Heart right ventricle (tissue), 16 donors: ENCODE measurements at regions of chr2 and their contacts with region 1.

Region 1: GRCh38 chr2:85538486-85539360 is at the start of gene MAT2A:
- DNase-seq: peak; percentile 95 to 96
- ATAC-seq: peak; percentile 88 to 94 (median 94)
- H3K4me3 ChIP-seq: peak within 1 kb of the TSS; percentile 59 to 97 (median 94)
- H3K27ac ChIP-seq: peak within 1 kb of the TSS; percentile 97 to 100 (median 100)
- H3K4me1 ChIP-seq: peaks cover 16 to 58% (median 50%) of the 10 kb centered on the region in 9 donors
- H3K27me3 ChIP-seq: no peaks in the 10 kb centered on the region
- CTCF ChIP-seq: peak; percentile 63 to 86 (median 80)
- total RNA-seq, gene MAT2A: 94.5 to 460 (median 129) TPM

Region 2: DNA sequence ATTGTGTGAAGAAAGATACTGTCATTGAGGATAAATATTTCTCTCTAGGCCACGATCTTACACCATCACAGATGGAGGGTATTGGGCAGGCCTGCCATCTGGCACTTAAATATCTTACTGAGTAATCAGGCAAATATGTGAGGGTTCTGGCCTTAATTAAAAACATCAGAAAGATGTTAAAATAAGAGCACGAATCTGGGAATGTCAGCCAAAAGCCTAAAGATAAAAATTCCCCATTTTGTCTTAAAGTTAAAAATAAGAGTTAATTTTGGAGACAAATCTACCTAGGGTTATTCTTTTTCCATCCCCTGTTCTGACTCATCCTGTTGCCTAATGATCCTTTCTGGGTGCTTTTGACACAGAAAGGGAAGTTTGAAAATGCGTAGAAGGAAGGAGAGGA is 1200.7 kb before region 1 on chr2:
- intact Hi-C with region 1: no loop called
- DNase-seq: no peak
- ATAC-seq: no peak
- H3K4me3 ChIP-seq: no peak overlapping the region
- H3K27ac ChIP-seq: no peak overlapping the region
- H3K4me1 ChIP-seq: no peaks in the 10 kb centered on the region
- H3K27me3 ChIP-seq: no peaks in the 10 kb centered on the region
- CTCF ChIP-seq: no peak

Region 3: GRCh38 chr2:85354286-85355072 is 184.2 kb before region 1 on chr2 and contains the starts of genes ELMOD3 and RETSAT:
- intact Hi-C with region 1: loop called in 1 of 10 experiments (anchors 5 kb)
- DNase-seq: peak; percentile 93 to 100
- ATAC-seq: peak; percentile 97 to 99 (median 98)
- H3K4me3 ChIP-seq: peak within 1 kb of the TSS; percentile 52 to 87 (median 68)
- H3K27ac ChIP-seq: peak within 1 kb of the TSS; percentile 38 to 92 (median 90)
- H3K4me1 ChIP-seq: peaks cover 0 to 46% (median 22%) of the 10 kb centered on the region in 9 donors
- H3K27me3 ChIP-seq: no peaks in the 10 kb centered on the region
- CTCF ChIP-seq: peak in 2 of 9 donors; percentile 8 to 13
- total RNA-seq, gene ELMOD3: 7.3 to 12.5 (median 8.8) TPM
- total RNA-seq, gene RETSAT: 27.9 to 87.4 (median 35.6) TPM

Region 4: DNA sequence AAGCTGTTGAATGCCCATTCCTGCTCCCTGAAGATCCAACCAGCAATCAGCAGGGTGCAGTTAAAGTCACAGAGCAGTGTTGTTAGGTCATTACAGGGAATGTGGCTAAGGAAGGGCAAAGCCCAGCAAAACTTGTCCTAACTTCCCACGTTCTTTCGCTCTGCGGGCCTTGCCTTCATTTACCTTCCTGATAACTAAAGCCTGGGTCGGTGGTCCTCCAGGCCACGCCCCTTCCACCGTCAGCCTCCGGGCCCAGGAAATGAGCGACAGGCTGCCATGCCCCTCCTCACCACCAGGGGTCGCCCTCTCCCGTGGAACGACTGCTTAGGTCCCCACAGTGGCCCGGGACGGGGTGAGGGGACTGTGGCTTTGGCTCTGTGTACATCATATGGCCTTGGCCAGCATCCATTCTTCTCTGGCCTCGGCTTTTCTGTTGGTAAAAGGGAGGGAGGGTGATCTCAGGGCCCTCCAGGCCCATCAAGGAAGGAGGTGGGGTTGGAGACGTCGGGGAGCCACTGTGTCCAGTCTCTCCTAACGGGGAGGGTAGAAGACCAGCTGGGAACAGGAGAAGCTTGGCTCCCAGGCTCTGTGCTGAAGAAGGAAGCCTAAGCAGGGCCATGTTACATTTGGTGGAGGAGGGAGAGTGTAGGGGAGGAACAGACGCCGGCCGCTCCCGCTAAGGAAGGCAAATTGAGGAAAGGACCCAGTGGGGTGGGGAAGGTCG is 118.0 kb before region 1 on chr2:
- intact Hi-C with region 1: loop called in 2 of 10 experiments (anchors 1 to 5 kb)
- DNase-seq: peak; percentile 88 to 92
- ATAC-seq: peak; percentile 74 to 86 (median 80)
- H3K4me3 ChIP-seq: peak overlapping the region in 6 of 10 donors; percentile 13 to 41 (median 28)
- H3K27ac ChIP-seq: peak overlapping the region; percentile 47 to 97 (median 83)
- H3K4me1 ChIP-seq: peaks cover 15 to 43% (median 34%) of the 10 kb centered on the region in 9 donors
- H3K27me3 ChIP-seq: no peaks in the 10 kb centered on the region
- CTCF ChIP-seq: peak; percentile 100

Region 5: GRCh38 chr2:85437488-85438284 is 101.0 kb before region 1 on chr2:
- intact Hi-C with region 1: loop called in 8 of 10 experiments (anchors 1 to 5 kb)
- DNase-seq: peak; percentile 87 to 92
- ATAC-seq: peak; percentile 79 to 89 (median 81)
- H3K4me3 ChIP-seq: peak overlapping the region in 9 of 10 donors; percentile 32 to 59 (median 55)
- H3K27ac ChIP-seq: peak overlapping the region; percentile 73 to 98 (median 94)
- H3K4me1 ChIP-seq: peaks cover 19 to 69% (median 46%) of the 10 kb centered on the region in 9 donors
- H3K27me3 ChIP-seq: no peaks in the 10 kb centered on the region
- CTCF ChIP-seq: no peak

Region 6: GRCh38 chr2:85485815-85486214 is 52.9 kb before region 1 on chr2:
- intact Hi-C with region 1: no loop called
- DNase-seq: no peak
- ATAC-seq: no peak
- H3K4me3 ChIP-seq: no peak overlapping the region
- H3K27ac ChIP-seq: no peak overlapping the region
- H3K4me1 ChIP-seq: peaks cover 0 to 5% (median 0%) of the 10 kb centered on the region in 9 donors
- H3K27me3 ChIP-seq: no peaks in the 10 kb centered on the region
- CTCF ChIP-seq: no peak

Region 7: GRCh38 chr2:85504778-85505323 is 33.9 kb before region 1 on chr2:
- intact Hi-C with region 1: loop called in 5 of 10 experiments (anchors 2 to 5 kb)
- DNase-seq: peak in 1 of 2 donors; percentile 40
- ATAC-seq: peak; percentile 35 to 89 (median 64)
- H3K4me3 ChIP-seq: no peak overlapping the region
- H3K27ac ChIP-seq: peak overlapping the region in 6 of 10 donors; percentile 36 to 74 (median 62)
- H3K4me1 ChIP-seq: peaks cover 0 to 71% (median 41%) of the 10 kb centered on the region in 9 donors
- H3K27me3 ChIP-seq: no peaks in the 10 kb centered on the region
- CTCF ChIP-seq: no peak

Region 8: GRCh38 chr2:85792783-85793441 is 254.2 kb after region 1 on chr2:
- intact Hi-C with region 1: no loop called
- DNase-seq: no peak
- ATAC-seq: no peak
- H3K4me3 ChIP-seq: no peak overlapping the region
- H3K27ac ChIP-seq: peak overlapping the region in 6 of 10 donors; percentile 19 to 59 (median 49)
- H3K4me1 ChIP-seq: peaks cover 37 to 91% (median 70%) of the 10 kb centered on the region in 9 donors
- H3K27me3 ChIP-seq: no peaks in the 10 kb centered on the region
- CTCF ChIP-seq: no peak